Heart right ventricle (tissue), 16 donors: ENCODE measurements at regions of chrX and their contacts with region 1.

Region 1: GRCh38 chrX:75156021-75156945 is at the start of gene ABCB7:
- DNase-seq: peak; percentile 42 to 73
- ATAC-seq: peak; percentile 90 to 96 (median 95)
- H3K4me3 ChIP-seq: peak within 1 kb of the TSS; percentile 52 to 80 (median 65)
- H3K27ac ChIP-seq: peak within 1 kb of the TSS; percentile 66 to 91 (median 87)
- H3K4me1 ChIP-seq: peaks cover 0 to 29% (median 13%) of the 10 kb centered on the region in 9 donors
- H3K27me3 ChIP-seq: peaks cover 0 to 16% (median 0%) of the 10 kb centered on the region in 7 donors
- CTCF ChIP-seq: peak in 5 of 9 donors; percentile 11 to 47 (median 41)
- total RNA-seq, gene ABCB7: 31.0 to 49.2 (median 39.8) TPM

Region 2: GRCh38 chrX:74684466-74684865 is 471.8 kb before region 1 on chrX:
- intact Hi-C with region 1: no loop called
- DNase-seq: no peak
- ATAC-seq: no peak
- H3K4me3 ChIP-seq: no peak overlapping the region
- H3K27ac ChIP-seq: no peak overlapping the region
- H3K4me1 ChIP-seq: no peaks in the 10 kb centered on the region
- H3K27me3 ChIP-seq: no peaks in the 10 kb centered on the region
- CTCF ChIP-seq: no peak

Region 3: GRCh38 chrX:75107863-75108509 is 48.3 kb before region 1 on chrX:
- intact Hi-C with region 1: loop called in 1 of 10 experiments (anchors 10 kb)
- DNase-seq: peak in 1 of 2 donors; percentile 7
- ATAC-seq: peak in 7 of 8 donors; percentile 41 to 72 (median 58)
- H3K4me3 ChIP-seq: no peak overlapping the region
- H3K27ac ChIP-seq: peak overlapping the region in 1 of 10 donors; percentile 15
- H3K4me1 ChIP-seq: peaks cover 0 to 8% (median 0%) of the 10 kb centered on the region in 9 donors
- H3K27me3 ChIP-seq: peaks cover 0 to 8% (median 0%) of the 10 kb centered on the region in 7 donors
- CTCF ChIP-seq: no peak

Region 4: DNA sequence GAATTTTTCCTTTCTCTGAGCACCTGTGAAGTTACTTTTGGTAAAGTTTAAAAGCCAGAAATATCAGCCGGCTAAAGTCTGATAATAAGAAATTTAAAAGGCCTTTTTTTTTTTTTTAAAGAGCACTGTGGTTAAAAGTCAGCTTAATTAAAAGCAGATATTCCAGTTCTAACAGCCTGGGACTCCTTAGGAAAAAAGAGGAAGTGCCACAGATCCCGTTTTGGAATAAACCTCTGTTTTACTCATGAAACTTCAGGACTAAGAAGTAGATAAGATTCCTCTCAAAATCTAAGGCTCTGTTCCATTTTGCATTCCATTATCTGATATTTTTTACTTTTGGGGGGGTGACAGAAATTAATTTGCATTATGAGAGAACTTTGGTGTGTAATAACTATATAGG is 38.0 kb before region 1 on chrX:
- intact Hi-C with region 1: no loop called
- DNase-seq: no peak
- ATAC-seq: no peak
- H3K4me3 ChIP-seq: no peak overlapping the region
- H3K27ac ChIP-seq: no peak overlapping the region
- H3K4me1 ChIP-seq: peaks cover 0 to 20% (median 0%) of the 10 kb centered on the region in 9 donors
- H3K27me3 ChIP-seq: no peaks in the 10 kb centered on the region
- CTCF ChIP-seq: no peak

Region 5: DNA sequence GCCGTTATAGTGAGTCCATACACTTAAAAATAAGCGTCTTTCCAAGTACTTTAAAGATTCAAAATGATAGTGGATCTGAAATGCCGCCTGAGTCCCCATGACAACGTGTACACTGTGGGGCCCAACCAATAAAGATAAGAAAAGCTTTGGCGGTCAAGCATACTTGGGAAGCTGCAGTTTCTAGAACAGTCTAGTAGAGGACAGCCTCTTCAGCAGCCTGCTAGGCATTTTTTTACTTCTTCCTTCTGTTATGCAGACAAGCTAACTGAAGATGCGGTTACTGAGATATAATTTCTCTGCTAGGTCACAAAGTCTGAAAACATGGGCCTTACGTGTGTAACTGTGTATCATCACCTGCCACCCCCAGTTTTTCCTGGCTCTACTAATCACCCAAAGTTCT is 117.2 kb after region 1 on chrX:
- intact Hi-C with region 1: loop called in 1 of 10 experiments (anchors 10 kb)
- DNase-seq: no peak
- ATAC-seq: peak in 7 of 8 donors; percentile 18 to 45 (median 37)
- H3K4me3 ChIP-seq: peak overlapping the region; percentile 62 to 83 (median 77)
- H3K27ac ChIP-seq: peak overlapping the region; percentile 83 to 96 (median 93)
- H3K4me1 ChIP-seq: peaks cover 0 to 43% (median 18%) of the 10 kb centered on the region in 9 donors
- H3K27me3 ChIP-seq: no peaks in the 10 kb centered on the region
- CTCF ChIP-seq: no peak